Breast epithelium (tissue), 4 donors: ENCODE measurements at regions of chr19 and their contacts with region 1.

Region 1: GRCh38 chr19:7888145-7888825 is at the start of gene LRRC8E:
- DNase-seq: peak in 1 of 2 donors; percentile 74
- H3K4me3 ChIP-seq: peak within 1 kb of the TSS; percentile 44 to 79 (median 64)
- H3K27ac ChIP-seq: peak within 1 kb of the TSS; percentile 71 to 84
- H3K4me1 ChIP-seq: peaks cover 0 to 2% of the 10 kb centered on the region in 2 donors
- H3K27me3 ChIP-seq: no peaks in the 10 kb centered on the region
- CTCF ChIP-seq: no peak
- POLR2A ChIP-seq: no peak
- total RNA-seq, gene LRRC8E: 1.4 to 15.1 (median 6.6) TPM

Region 2: DNA sequence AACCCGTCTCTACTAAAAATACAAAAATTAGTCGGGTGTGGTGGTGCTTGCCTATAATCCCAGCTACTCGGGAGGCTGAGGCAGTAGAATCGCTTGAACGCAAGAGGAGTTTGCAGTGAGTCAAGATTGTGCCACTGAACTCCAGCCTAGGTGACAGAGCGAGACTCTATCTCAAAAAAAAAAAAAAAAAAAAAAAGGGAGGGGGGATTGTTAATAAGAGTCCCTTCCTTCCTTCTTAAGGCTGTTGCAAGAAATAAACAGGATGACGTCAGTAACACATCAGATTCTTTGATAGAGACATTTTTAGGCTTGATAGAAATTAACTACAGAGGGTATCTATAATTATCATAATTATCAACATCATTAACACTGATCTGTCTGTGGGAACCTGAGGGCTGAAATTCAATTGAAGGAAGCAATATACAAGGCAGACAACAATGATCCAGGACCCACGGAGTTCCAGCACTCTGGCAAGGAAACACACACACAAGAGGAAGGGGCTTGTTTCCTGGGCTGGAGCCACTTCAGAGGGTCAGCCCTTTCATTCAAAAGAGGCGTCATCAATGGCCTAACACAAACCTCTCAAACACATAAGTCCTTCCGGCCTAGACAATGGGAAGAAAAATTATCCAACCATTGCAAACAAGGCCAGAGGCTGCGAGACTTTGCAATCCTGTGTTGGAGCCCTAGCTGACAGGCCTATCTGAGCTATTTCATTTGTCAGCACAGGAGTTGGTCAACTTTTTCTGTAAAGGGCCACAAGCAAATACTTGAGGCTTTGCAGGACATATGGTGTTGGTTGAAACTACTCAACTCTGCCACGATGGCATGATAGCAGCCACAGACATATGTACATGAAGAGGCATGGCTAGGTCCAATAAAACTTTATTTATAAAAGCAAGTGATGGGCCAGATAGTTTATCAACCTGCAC is 699.3 kb before region 1 on chr19:
- intact Hi-C with region 1: no loop called
- DNase-seq: no peak
- H3K4me3 ChIP-seq: no peak overlapping the region
- H3K27ac ChIP-seq: peak overlapping the region in 1 of 2 donors; percentile 33
- H3K4me1 ChIP-seq: no peaks in the 10 kb centered on the region
- H3K27me3 ChIP-seq: no peaks in the 10 kb centered on the region
- CTCF ChIP-seq: no peak
- POLR2A ChIP-seq: no peak

Region 3: DNA sequence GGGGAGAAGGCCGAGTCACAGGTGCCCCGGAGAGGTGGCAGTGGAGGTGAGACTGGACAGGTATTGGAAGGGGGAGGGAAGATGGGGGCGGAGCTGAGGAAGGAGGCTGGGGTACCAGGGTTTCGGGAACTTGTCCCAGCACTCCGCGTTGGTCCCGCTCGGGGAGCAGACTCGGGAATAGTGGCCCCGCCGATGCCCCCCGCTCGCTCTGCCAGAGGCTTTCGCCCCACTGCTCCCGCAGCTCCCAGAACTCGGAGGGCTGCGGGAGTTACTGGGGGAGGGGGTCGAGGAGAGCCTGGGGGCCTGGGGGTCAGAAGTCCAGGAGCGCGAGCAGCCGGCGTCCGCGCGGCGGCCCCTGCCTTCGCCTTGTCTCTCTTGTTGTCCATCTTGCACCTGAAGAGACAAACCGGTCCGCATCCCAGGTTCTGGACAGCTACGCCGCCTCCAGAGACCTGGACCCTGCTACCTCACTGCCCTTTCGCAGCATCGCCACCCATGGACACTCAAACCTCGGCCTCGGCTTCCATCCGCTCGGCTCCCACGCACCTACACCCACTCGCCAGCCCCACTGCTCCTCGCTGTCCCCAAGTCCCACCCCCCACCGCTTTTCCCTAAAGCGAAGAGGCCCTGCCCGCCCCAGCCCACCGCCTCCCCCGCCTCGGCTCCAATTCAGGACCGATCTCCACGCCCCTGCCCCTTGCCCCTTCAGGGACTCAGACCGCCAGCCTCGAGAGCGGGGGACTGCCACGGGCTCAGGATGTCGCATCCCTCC is 14.8 kb before region 1 on chr19:
- intact Hi-C with region 1: loop called (anchors 1 kb)
- DNase-seq: no peak
- H3K4me3 ChIP-seq: peak overlapping the region in 2 of 3 donors; percentile 56 to 76
- H3K27ac ChIP-seq: peak overlapping the region in 1 of 2 donors; percentile 70
- H3K4me1 ChIP-seq: peaks cover 0 to 8% of the 10 kb centered on the region in 2 donors
- H3K27me3 ChIP-seq: peaks cover 5 to 20% of the 10 kb centered on the region in 2 donors
- CTCF ChIP-seq: no peak
- POLR2A ChIP-seq: no peak